ENCODE measurements at regions of chr10 and their contacts with region 1.

Region 1: GRCh38 chr10:123008439-123009205 is at the starts of genes ACADSB and IKZF5:
- DNase-seq: peak; percentile 98
- total RNA-seq, gene ACADSB: 65.3 TPM
- total RNA-seq, gene IKZF5: 11.3 TPM

Region 2: DNA sequence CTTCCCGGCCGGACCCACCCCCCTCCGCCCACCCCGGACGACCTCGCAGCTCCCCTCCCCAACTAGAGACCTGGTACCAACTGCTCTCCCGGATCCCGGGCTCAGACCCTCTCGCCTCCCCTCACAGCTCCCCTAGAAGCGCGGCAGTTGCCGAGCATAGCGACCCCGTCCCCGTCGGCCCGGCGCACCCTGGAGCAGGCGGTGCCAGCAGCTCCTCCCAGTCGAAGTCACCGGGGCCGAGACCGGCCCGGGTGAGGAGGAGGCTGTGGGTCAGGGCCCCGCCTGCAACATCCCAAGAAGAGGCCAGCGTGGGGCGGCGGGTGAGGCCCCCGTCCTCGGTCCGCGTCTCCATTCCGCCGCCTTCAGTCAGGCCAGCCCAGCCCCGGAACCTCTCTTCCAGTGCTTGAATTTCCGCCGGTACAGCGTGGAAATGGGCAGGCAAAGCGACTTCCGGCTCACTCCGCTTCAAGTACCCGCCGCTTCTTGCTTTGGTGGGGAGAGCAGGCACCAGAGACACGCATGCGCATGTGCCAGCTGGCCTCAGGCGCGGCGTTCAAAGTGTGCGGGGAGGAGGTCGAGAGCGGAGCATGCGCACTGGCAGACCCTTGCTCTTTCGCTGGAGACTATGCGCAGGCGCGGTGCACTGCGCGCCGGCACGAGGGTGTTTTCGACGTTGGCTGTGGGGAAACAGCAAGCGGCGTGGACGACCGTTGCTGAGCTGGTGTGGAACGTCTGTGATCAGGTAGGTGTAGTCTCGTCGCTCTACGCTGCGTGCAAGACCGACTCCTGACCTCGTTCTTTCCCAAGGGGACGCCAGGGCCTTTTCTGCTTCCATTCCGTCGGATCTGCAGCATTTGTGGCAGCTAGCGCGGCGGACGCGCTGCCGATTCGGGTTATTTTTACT is 54.5 kb before region 1 on chr10 and contains the start of gene C10orf88:
- intact Hi-C with region 1: loop called (anchors 1 kb)
- DNase-seq: peak; percentile 97
- total RNA-seq, gene C10orf88: 6.6 TPM

Region 3: DNA sequence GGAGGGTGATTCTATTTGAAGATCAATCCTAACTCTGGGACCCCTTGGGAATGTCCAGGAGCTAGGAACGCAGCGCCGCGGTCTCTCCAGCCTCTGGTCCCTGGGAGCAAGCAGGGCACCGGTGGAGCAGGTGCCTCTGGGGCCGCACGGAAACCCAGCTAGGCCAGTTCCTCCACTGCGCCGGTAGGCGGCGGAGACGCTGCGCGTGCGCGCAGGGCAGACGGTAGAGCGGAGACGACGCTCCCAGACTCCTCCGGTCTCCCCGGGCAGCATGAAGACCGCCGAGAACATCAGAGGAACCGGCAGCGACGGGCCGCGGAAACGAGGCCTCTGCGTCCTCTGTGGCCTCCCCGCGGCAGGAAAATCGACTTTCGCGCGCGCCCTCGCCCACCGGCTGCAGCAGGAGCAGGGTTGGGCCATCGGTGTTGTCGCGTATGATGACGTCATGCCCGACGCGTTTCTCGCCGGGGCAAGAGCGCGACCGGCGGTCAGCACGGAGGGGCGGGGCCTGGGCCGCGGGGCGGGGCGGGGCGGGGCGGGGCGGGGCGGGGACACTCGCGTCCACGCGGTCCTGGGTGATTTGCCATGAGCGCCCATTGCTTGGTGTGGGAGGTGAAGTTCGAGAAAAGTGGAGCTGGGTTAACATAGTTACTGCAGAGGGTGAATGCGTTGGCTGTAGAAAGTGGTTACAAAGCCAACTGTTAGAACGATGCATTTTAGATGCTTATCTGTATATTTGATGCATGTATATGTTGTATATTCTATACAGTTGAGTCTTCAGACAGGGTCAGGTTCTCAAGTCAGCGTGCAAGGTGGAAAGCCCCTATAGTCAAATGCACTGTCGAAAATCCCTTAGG is 28.2 kb before region 1 on chr10 and contains the start of gene PSTK:
- intact Hi-C with region 1: loop called (anchors 1 kb)
- DNase-seq: peak; percentile 95
- total RNA-seq, gene PSTK: 2.3 TPM

Region 4: DNA sequence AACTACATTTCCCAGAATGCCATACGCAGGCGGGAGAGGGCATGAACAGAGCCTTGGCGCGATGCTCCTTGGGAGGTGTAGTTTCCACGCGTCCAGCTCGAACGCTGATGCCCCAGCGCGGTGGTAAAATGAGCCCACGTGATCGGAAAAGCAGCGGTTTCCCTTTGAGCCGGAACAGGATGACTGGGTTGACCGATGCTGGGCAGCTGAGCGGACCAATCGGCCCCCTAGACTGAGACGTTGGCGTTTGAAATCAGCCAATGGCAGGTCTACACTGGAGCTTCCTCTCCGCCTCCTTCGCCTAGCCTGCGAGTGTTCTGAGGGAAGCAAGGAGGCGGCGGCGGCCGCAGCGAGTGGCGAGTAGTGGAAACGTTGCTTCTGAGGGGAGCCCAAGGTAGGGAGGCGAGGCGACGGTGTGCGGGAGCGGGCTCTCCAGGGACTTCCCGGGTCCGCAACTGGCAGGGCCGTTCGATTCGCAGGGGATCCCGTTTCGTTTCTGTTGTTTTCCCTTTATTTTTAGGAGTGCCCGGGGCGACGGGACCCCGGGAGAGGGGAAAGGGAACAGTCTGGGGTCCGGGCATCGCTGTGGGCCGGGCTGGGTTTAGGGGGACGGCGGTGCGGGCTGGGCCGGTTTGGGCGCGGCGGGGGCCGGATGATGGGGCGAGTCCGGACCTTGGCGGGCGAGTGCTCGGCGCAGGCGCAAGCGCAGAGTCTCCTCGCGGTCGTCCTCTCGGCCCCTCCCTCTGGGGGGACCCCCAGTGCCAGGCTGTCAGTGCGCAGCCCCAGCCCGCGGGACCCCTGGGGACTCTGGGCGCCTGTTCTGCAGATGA is 145.7 kb after region 1 on chr10 and contains the start of gene BUB3:
- intact Hi-C with region 1: loop called (anchors 5 kb)
- DNase-seq: peak; percentile 99
- total RNA-seq, gene BUB3: 30.6 TPM